ENCODE measurements at regions of chr7 and their contacts with region 1.

Region 1: DNA sequence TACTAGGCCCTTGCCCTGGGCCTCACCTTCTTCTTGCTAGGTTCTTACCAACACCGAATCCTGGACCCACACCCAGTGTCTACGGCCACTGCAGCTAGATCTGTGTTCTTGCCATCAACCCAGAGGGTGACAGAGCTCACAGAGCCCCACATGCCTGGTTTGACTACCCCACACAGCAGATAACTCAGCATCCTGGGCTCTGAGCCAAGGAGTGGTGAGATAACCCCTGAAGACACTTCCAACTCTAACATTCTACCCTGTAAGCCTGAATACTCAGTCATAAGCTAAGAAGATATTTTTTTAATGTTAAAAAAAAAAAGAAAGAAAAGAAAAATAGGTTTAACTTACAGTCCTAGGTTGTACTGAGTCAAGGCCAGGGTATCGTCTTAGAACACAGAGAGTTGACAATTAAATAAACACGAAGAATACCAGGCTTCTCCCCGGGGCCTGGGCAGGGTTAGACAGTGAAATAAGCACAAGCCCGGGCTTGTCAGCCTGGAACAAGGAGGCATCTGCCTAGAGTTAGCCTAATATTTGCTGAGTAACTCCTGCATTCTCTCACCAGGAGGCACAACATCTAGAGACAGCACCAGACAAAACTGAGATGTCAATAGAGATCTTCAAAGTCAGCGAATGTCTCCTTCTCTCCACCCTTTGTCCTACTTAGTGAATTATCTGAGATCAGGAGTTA is 556.5 kb upstream of the LRRN3 start:
- DNase-seq: peak; percentile 71
- ATAC-seq: peak; percentile 85
- H3K4me3 ChIP-seq: no peak overlapping the region
- H3K27ac ChIP-seq: peak overlapping the region; percentile 94
- H3K4me1 ChIP-seq: peaks cover 11% of the 10 kb centered on the region
- H3K27me3 ChIP-seq: no peaks in the 10 kb centered on the region
- CTCF ChIP-seq: peak; percentile 16; the same call in 1 of the 2 replicates
- POLR2A ChIP-seq: no peak
- RAD21 ChIP-seq: no peak

Region 2: GRCh38 chr7:110050785-110051184 is 483.6 kb before region 1 on chr7:
- CTCF ChIA-PET with region 1: no interaction called
- POLR2A ChIA-PET with region 1: no interaction called
- dilution Hi-C with region 1: no loop called
- in situ Hi-C with region 1: no loop called
- intact Hi-C with region 1: no loop called
- DNase-seq: peak; percentile 12
- ATAC-seq: no peak
- H3K4me3 ChIP-seq: no peak overlapping the region
- H3K27ac ChIP-seq: no peak overlapping the region
- H3K4me1 ChIP-seq: no peaks in the 10 kb centered on the region
- H3K27me3 ChIP-seq: no peaks in the 10 kb centered on the region
- CTCF ChIP-seq: no peak
- POLR2A ChIP-seq: no peak
- RAD21 ChIP-seq: no peak

Region 3: DNA sequence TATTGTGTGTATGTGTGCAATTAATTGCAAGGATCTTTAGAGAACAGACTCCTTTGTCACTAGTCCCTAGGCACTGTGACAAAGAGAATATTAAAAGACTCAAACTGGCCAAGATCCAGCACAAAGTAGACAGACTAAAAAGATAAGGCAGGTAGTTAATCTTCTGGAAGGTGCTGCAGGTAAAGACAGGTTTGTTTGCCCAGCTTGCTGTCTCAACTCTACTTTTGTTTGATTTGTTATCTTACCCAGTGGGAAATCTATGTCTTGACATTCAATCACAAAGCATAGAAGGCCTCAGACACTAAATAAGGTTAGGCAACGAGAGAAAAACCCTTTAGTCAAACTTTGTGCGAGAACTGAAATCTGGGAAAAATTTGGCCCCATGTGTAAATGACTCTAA is 251.3 kb before region 1 on chr7:
- CTCF ChIA-PET with region 1: no interaction called
- POLR2A ChIA-PET with region 1: no interaction called
- dilution Hi-C with region 1: no loop called
- in situ Hi-C with region 1: no loop called
- intact Hi-C with region 1: no loop called
- DNase-seq: no peak
- ATAC-seq: no peak
- H3K4me3 ChIP-seq: no peak overlapping the region
- H3K27ac ChIP-seq: no peak overlapping the region
- H3K4me1 ChIP-seq: no peaks in the 10 kb centered on the region
- H3K27me3 ChIP-seq: no peaks in the 10 kb centered on the region
- CTCF ChIP-seq: no peak
- POLR2A ChIP-seq: no peak
- RAD21 ChIP-seq: no peak

Region 4: DNA sequence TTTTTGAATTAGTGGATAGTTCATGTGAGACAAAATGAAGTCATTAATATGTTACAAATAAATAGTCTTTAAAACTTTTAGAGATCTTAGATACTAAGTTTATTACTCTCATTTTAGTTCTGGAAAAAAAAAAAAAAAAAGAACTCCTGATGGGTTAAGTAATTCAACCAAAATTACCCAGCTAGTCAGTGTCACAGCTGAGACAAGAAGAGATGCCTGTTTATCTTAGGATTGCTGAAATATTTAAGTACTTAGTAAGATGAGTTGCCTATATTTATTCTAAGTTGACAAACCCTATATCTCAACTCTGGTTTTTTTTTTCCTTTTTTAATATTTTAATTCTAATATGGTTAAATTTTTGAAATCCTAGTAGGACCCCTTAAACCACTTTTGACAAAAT is 224.4 kb before region 1 on chr7:
- CTCF ChIA-PET with region 1: no interaction called
- POLR2A ChIA-PET with region 1: no interaction called
- dilution Hi-C with region 1: no loop called
- in situ Hi-C with region 1: no loop called
- intact Hi-C with region 1: loop called (anchors 5 kb)
- DNase-seq: peak; percentile 72
- ATAC-seq: peak; percentile 79
- H3K4me3 ChIP-seq: no peak overlapping the region
- H3K27ac ChIP-seq: peak overlapping the region; percentile 68; the same call in 1 of the 2 replicates
- H3K4me1 ChIP-seq: peaks cover 6% of the 10 kb centered on the region
- H3K27me3 ChIP-seq: no peaks in the 10 kb centered on the region
- CTCF ChIP-seq: no peak
- POLR2A ChIP-seq: no peak
- RAD21 ChIP-seq: no peak

Region 5: DNA sequence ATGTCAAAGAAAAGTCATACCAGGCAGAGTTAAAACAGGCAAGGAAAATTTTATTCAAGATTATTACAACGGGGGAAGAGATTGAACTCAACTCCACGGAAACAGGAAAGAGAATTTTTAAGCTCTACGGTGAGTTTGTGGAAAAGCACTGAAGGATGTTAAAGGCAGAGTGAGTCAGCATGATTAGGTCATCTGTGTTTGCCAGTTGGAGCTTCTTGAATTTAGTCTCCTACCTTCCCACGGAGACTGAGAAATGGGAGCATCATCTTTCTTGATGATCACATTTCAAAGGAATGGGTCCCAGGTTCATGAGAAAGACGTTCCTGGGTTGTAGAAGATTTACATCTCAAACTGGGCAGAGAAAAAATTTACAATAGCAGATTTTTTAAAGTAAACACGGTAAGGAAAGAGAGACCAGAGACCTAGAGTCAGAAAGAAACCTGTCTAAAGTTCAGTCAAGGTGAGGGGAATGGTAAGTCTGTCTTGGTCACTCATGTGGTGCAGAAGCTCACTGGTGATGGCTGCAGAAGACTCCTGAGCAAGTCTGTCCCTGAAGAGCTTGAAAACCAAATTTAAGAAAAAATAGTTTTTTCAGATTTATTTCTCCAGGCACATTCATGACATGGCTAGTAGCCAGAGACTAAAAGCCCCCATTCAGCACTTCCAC is 39.6 kb after region 1 on chr7:
- CTCF ChIA-PET with region 1: no interaction called
- POLR2A ChIA-PET with region 1: no interaction called
- dilution Hi-C with region 1: no loop called
- in situ Hi-C with region 1: no loop called
- intact Hi-C with region 1: loop called (anchors 5 kb)
- DNase-seq: peak; percentile 99
- ATAC-seq: peak; percentile 85
- H3K4me3 ChIP-seq: no peak overlapping the region
- H3K27ac ChIP-seq: peak overlapping the region; percentile 95
- H3K4me1 ChIP-seq: peaks cover 11% of the 10 kb centered on the region
- H3K27me3 ChIP-seq: no peaks in the 10 kb centered on the region
- CTCF ChIP-seq: no peak
- POLR2A ChIP-seq: peak; percentile 32; the same call in 1 of the 2 replicates
- RAD21 ChIP-seq: no peak